ENCODE measurements at regions of chr10 and their contacts with region 1.

Region 1: DNA sequence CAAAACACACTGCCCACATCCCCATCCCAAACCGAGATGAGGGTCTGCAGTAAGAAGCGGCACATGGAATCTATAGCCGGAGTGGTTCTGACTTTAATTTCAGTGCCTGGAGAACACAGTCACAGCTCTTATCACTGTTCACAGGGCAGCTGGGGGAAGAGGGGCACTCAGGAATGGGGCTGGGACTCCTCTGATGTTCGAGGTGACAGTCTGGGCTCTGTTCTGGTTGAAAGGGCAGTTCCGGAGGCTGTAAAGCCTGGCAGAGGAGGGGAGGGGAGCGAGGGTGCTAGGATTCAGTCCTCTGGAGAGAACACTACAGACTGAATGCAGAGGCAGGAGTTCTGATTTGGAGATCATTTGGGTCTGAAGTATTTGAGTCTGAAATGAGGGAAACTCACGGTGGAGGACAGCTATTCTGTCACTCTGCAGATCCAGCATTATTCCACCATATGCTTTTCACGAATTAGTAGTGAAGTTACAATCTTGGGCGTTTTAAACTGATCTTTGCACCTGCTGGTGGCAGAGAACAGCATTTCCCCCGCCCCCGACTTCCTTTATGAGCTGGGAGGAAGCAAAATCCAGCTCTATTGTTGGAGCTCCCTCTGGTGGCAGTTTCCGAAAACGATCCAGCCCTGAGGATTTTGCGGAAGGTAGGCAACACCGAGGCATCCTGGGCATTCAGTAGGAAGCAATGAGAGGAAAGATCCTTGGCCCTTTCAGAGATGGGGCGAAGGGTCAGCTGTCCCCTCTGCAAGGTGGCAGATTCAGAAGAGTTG is 22.7 kb upstream of the KCNK18 start:
- DNase-seq: peak; percentile 73 to 96 (median 89)

Region 2: GRCh38 chr10:116683821-116684220 is 490.8 kb before region 1 on chr10:
- intact Hi-C with region 1: loop called (anchors 5 kb)
- DNase-seq: no peak

Region 3: GRCh38 chr10:116796910-116797513 is 377.6 kb before region 1 on chr10:
- intact Hi-C with region 1: loop called (anchors 2 kb)
- DNase-seq: peak; percentile 67 to 96 (median 88)

Region 4: GRCh38 chr10:117094856-117095255 is 79.8 kb before region 1 on chr10:
- intact Hi-C with region 1: no loop called
- DNase-seq: peak in 40 of 42 donors; percentile 21 to 83 (median 58)

Measured in head of caudate nucleus (tissue), 42 donors.